T-cell (primary cell): ENCODE measurements at regions of chr12 and their contacts with region 1.

Region 1: DNA sequence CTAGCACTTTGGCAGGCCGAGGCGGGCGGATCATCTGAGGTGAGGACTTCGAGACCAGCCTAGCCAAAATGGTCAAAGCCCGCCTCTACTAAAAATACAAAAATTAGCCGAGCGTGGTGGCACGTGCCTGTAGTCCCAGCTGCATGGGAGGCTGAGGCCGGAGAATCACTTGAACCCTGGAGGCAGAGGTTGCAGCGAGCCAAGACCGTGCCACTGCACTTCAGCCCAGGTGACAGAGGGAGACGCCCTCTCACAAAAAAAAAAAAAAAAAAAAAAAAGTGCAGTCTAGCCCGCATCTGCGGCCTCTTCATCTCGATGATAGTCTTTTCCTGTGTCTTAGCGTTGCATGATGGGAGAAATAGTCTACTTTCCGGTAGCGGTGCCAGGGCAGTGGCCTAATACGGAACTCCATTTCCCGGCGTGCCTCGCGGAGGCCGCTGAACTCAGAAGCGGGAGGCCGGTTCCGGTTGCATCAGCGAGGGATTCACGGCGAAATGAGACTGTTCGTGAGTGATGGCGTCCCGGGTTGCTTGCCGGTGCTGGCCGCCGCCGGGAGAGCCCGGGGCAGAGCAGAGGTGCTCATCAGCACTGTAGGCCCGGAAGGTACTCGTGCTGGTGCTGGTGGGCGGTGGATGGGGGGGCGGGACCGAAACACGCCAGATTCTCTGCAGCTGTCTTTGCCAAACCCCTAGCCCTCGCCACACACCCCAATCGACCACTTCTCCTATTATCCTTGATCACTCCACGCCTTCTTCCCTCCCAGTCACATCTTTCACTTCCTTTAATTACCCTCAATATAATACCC is at the start of gene MARS1:
- DNase-seq: peak; percentile 74 to 97 (median 91)
- ATAC-seq: peak; percentile 98 to 99 (median 98)
- H3K4me3 ChIP-seq: peak within 1 kb of the TSS; percentile 94 to 95
- H3K4me3 Mint-ChIP-seq: peak within 1 kb of the TSS; percentile 90 to 98 (median 96)
- H3K27ac ChIP-seq: peak within 1 kb of the TSS; percentile 66
- H3K27ac Mint-ChIP-seq: peak within 1 kb of the TSS; percentile 94 to 95
- H3K4me1 ChIP-seq: peaks cover 12 to 23% of the 10 kb centered on the region in 2 experiments
- H3K4me1 Mint-ChIP-seq: peaks cover 38 to 40% (median 38%) of the 10 kb centered on the region in 3 donors
- H3K27me3 ChIP-seq: no peaks in the 10 kb centered on the region
- H3K27me3 Mint-ChIP-seq: no peaks in the 10 kb centered on the region
- total RNA-seq, gene MARS1: 167 to 350 (median 320) TPM

Region 2: GRCh38 chr12:56987551-56988053 is 500.2 kb before region 1 on chr12:
- CTCF ChIA-PET with region 1: no interaction called
- POLR2A ChIA-PET with region 1: no interaction called
- DNase-seq: peak in 34 of 35 experiments; percentile 41 to 83 (median 66)
- ATAC-seq: peak; percentile 78 to 80 (median 80)
- H3K4me3 ChIP-seq: no peak overlapping the region
- H3K4me3 Mint-ChIP-seq: peak overlapping the region in 1 of 3 donors; percentile 46
- H3K27ac ChIP-seq: no peak overlapping the region
- H3K27ac Mint-ChIP-seq: no peak overlapping the region
- H3K4me1 ChIP-seq: peaks cover 0 to 14% of the 10 kb centered on the region in 2 experiments
- H3K4me1 Mint-ChIP-seq: peaks cover 9 to 15% (median 15%) of the 10 kb centered on the region in 3 donors
- H3K27me3 ChIP-seq: no peaks in the 10 kb centered on the region
- H3K27me3 Mint-ChIP-seq: no peaks in the 10 kb centered on the region

Region 3: GRCh38 chr12:57401165-57401564 is 86.6 kb before region 1 on chr12:
- CTCF ChIA-PET with region 1: no interaction called
- POLR2A ChIA-PET with region 1: no interaction called
- DNase-seq: no peak
- ATAC-seq: no peak
- H3K4me3 ChIP-seq: no peak overlapping the region
- H3K4me3 Mint-ChIP-seq: no peak overlapping the region
- H3K27ac ChIP-seq: no peak overlapping the region
- H3K27ac Mint-ChIP-seq: no peak overlapping the region
- H3K4me1 ChIP-seq: no peaks in the 10 kb centered on the region
- H3K4me1 Mint-ChIP-seq: peaks cover 21 to 25% (median 24%) of the 10 kb centered on the region in 3 donors
- H3K27me3 ChIP-seq: no peaks in the 10 kb centered on the region
- H3K27me3 Mint-ChIP-seq: no peaks in the 10 kb centered on the region

Region 4: GRCh38 chr12:57534991-57535543 is 47.3 kb after region 1 on chr12:
- CTCF ChIA-PET with region 1: interaction called in 1 of 2 experiments, 11 read pairs
- POLR2A ChIA-PET with region 1: no interaction called
- DNase-seq: no peak
- ATAC-seq: no peak
- H3K4me3 ChIP-seq: no peak overlapping the region
- H3K4me3 Mint-ChIP-seq: no peak overlapping the region
- H3K27ac ChIP-seq: no peak overlapping the region
- H3K27ac Mint-ChIP-seq: no peak overlapping the region
- H3K4me1 ChIP-seq: no peaks in the 10 kb centered on the region
- H3K4me1 Mint-ChIP-seq: peaks cover 0 to 3% (median 2%) of the 10 kb centered on the region in 3 donors
- H3K27me3 ChIP-seq: no peaks in the 10 kb centered on the region
- H3K27me3 Mint-ChIP-seq: no peaks in the 10 kb centered on the region

Region 5: GRCh38 chr12:57568838-57569237 is 81.0 kb after region 1 on chr12:
- CTCF ChIA-PET with region 1: no interaction called
- POLR2A ChIA-PET with region 1: no interaction called
- DNase-seq: no peak
- ATAC-seq: no peak
- H3K4me3 ChIP-seq: no peak overlapping the region
- H3K4me3 Mint-ChIP-seq: no peak overlapping the region
- H3K27ac ChIP-seq: no peak overlapping the region
- H3K27ac Mint-ChIP-seq: no peak overlapping the region
- H3K4me1 ChIP-seq: no peaks in the 10 kb centered on the region
- H3K4me1 Mint-ChIP-seq: no peaks in the 10 kb centered on the region
- H3K27me3 ChIP-seq: peaks cover 5 to 8% of the 10 kb centered on the region in 2 experiments
- H3K27me3 Mint-ChIP-seq: peaks cover 5 to 9% of the 10 kb centered on the region in 2 donors